ENCODE measurements at regions of chr5 and their contacts with region 1.

Region 1: GRCh38 chr5:138352071-138352721 is at the start of gene KDM3B:
- DNase-seq: peak; percentile 76 to 96 (median 89)
- ATAC-seq: peak; percentile 79 to 91 (median 83)
- H3K4me3 ChIP-seq: peak within 1 kb of the TSS; percentile 92
- H3K4me3 Mint-ChIP-seq: peak within 1 kb of the TSS; percentile 92 to 96 (median 95)
- H3K27ac ChIP-seq: peak within 1 kb of the TSS; percentile 87
- H3K27ac Mint-ChIP-seq: peak within 1 kb of the TSS; percentile 92 to 94
- H3K4me1 ChIP-seq: peaks cover 17 to 18% of the 10 kb centered on the region in 2 experiments
- H3K4me1 Mint-ChIP-seq: peaks cover 45 to 54% (median 48%) of the 10 kb centered on the region in 3 donors
- H3K27me3 ChIP-seq: no peaks in the 10 kb centered on the region
- H3K27me3 Mint-ChIP-seq: no peaks in the 10 kb centered on the region
- total RNA-seq, gene KDM3B: 72.9 to 78.3 (median 76.0) TPM

Region 2: DNA sequence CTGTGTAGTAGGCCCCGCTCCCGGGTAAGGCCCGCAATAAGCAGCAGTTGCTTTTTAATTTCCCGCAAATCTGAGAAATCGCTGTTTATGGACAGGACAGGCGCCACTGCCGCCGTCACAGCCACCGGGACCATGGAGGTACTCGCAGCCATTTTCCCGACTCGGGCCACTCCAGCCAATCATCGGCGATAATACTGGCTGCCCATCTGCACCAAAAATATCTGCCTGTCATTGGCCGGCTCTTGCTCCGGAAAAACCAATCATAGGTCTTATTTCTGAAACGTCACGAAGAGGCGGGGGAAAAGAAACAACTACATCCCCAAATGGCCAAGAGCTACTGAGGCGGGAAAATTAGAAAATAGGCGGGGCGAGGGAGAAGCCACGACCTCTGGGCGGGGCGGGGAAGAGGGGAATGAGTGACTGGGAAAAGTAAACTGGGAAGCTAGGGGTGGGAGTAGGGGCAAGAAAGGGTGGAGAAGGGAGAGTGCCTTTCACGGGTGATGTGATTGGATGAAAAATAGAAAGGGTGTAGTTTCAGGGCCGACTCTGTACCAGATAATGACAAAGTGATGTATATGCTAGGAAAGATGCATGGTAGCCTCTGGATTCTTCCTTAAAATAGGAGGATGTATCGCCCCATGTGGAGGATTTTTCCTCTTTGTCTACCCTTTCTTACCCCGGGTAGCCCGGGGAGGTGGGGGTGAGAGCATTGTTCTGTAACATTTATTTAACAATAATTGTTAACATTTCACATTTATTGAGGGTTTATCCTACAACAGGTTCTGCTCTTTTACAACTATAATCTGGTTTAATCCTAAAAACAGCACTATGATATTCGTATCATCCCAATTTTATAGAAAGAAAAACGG is 138.8 kb before region 1 on chr5 and contains the start of gene CDC23:
- CTCF ChIA-PET with region 1: interaction called, 4 to 10 read pairs
- POLR2A ChIA-PET with region 1: interaction called in 1 of 2 experiments, 4 read pairs
- DNase-seq: peak; percentile 66 to 96 (median 90)
- ATAC-seq: peak; percentile 97 to 98 (median 97)
- H3K4me3 ChIP-seq: peak within 1 kb of the TSS; percentile 88 to 100
- H3K4me3 Mint-ChIP-seq: peak within 1 kb of the TSS; percentile 96 to 99 (median 99)
- H3K27ac ChIP-seq: peak within 1 kb of the TSS; percentile 70
- H3K27ac Mint-ChIP-seq: peak within 1 kb of the TSS; percentile 94 to 95
- H3K4me1 ChIP-seq: peaks cover 14 to 21% of the 10 kb centered on the region in 2 experiments
- H3K4me1 Mint-ChIP-seq: peaks cover 23 to 26% (median 24%) of the 10 kb centered on the region in 3 donors
- H3K27me3 ChIP-seq: peaks cover 0 to 3% of the 10 kb centered on the region in 2 experiments
- H3K27me3 Mint-ChIP-seq: no peaks in the 10 kb centered on the region
- total RNA-seq, gene CDC23: 14.8 to 31.0 (median 23.8) TPM

Region 3: GRCh38 chr5:138331449-138332368 is 20.5 kb before region 1 on chr5 and contains the start of gene CDC25C:
- CTCF ChIA-PET with region 1: interaction called, 7 to 89 read pairs
- POLR2A ChIA-PET with region 1: interaction called, 10 to 11 read pairs
- DNase-seq: peak; percentile 86 to 100 (median 97)
- ATAC-seq: peak; percentile 99 to 100 (median 100)
- H3K4me3 ChIP-seq: peak within 1 kb of the TSS; percentile 63 to 87
- H3K4me3 Mint-ChIP-seq: peak within 1 kb of the TSS; percentile 80 to 82 (median 80)
- H3K27ac ChIP-seq: peak within 1 kb of the TSS; percentile 31
- H3K27ac Mint-ChIP-seq: peak within 1 kb of the TSS; percentile 26 to 66
- H3K4me1 ChIP-seq: peaks cover 6 to 15% of the 10 kb centered on the region in 2 experiments
- H3K4me1 Mint-ChIP-seq: peaks cover 18 to 19% (median 19%) of the 10 kb centered on the region in 3 donors
- H3K27me3 ChIP-seq: no peaks in the 10 kb centered on the region
- H3K27me3 Mint-ChIP-seq: no peaks in the 10 kb centered on the region
- total RNA-seq, gene CDC25C: 0.23 TPM in 1 of 5 donors, not detected in the others

Region 4: DNA sequence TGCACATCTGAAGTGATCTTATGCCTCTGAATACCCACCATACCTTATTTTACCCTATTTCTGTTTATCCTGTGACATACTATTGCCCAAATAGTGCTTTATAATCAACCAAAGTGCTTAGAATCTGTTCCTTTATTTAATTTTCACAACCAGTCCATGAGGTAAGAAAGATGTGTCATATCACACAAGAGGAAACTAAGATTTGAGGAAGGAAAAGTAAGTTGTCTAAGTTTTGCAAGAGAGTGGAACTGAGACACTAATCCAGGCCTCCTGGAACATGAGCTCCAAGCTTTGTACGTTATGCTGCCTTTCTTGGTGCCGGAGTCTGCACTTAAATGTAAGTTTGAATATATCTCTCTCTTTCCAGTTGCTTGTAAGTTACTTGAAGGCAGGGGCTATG is 17.5 kb after region 1 on chr5:
- CTCF ChIA-PET with region 1: interaction called, 5 to 32 read pairs
- POLR2A ChIA-PET with region 1: interaction called, 4 read pairs
- DNase-seq: no peak
- ATAC-seq: no peak
- H3K4me3 ChIP-seq: no peak overlapping the region
- H3K4me3 Mint-ChIP-seq: peak overlapping the region in 1 of 3 donors; percentile 41
- H3K27ac ChIP-seq: no peak overlapping the region
- H3K27ac Mint-ChIP-seq: no peak overlapping the region
- H3K4me1 ChIP-seq: peaks cover 3 to 4% of the 10 kb centered on the region in 2 experiments
- H3K4me1 Mint-ChIP-seq: peaks cover 48 to 55% (median 51%) of the 10 kb centered on the region in 3 donors
- H3K27me3 ChIP-seq: no peaks in the 10 kb centered on the region
- H3K27me3 Mint-ChIP-seq: no peaks in the 10 kb centered on the region

Measured in T-cell (primary cell).